ENCODE measurements at regions of chr1 and their contacts with region 1.

Region 1: GRCh38 chr1:110312188-110313121 is 26.7 kb upstream of the RBM15 start:
- DNase-seq: peak; percentile 81
- H3K4me3 ChIP-seq: no peak overlapping the region
- H3K27ac ChIP-seq: no peak overlapping the region
- H3K4me1 ChIP-seq: peaks cover 7% of the 10 kb centered on the region
- H3K27me3 ChIP-seq: no peaks in the 10 kb centered on the region
- CTCF ChIP-seq: peak; percentile 86

Region 2: GRCh38 chr1:109776911-109777310 is 535.5 kb before region 1 on chr1:
- intact Hi-C with region 1: no loop called
- DNase-seq: peak; percentile 86
- H3K4me3 ChIP-seq: no peak overlapping the region
- H3K27ac ChIP-seq: peak overlapping the region; percentile 4
- H3K4me1 ChIP-seq: no peaks in the 10 kb centered on the region
- H3K27me3 ChIP-seq: no peaks in the 10 kb centered on the region
- CTCF ChIP-seq: peak; percentile 96

Region 3: GRCh38 chr1:110209715-110210603 is 102.5 kb before region 1 on chr1 and contains the start of gene KCNC4:
- intact Hi-C with region 1: loop called (anchors 2 kb)
- DNase-seq: peak; percentile 90
- H3K4me3 ChIP-seq: peak within 1 kb of the TSS; percentile 80
- H3K27ac ChIP-seq: peak within 1 kb of the TSS; percentile 62
- H3K4me1 ChIP-seq: no peaks in the 10 kb centered on the region
- H3K27me3 ChIP-seq: no peaks in the 10 kb centered on the region
- CTCF ChIP-seq: no peak
- total RNA-seq, gene KCNC4: 6.7 to 8.4 TPM

Region 4: DNA sequence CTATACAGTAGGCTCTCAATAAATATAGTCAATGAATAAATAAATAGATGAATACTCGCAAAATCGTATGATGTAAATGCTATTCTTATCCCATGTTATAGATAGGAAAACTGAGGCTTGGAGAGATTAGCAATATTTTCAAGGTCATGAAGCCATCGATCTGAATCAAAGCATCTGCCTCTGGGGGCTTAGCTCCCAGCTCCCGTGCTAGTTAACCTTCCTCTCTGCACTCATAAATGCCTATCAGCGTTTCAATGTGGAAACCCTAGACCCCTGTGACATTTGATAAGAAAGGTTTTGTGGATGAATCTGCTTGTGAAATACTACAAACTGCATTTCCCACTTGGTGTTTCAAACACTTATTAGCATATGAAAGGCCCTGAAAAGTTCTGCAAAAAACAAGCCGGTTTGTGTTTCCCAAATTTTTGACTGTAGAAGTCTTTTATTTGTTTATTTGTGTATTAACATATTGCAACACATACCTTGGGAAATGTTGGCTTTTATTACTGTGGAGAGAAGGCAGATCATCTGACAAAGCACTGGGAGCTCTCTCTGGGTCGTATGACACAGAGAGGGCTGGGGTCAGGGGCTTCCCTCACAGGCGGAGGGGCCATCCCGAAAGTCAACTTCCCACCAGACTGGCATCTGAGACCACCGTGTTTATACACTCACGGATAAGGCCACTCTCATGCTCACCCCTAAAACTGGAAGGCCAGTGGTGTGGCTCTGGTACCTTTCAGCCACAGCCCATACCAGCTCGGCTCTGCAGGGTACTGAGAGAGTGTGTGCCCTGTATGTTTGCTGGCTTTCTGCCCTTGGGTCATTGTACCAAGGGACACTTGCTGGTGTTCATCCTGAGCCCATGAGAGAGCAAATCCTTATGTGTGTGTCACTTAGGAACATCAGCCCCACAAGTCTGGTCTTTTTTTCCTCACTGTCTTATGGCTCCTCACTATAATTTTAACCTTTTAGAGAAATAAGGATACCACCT is 137.5 kb after region 1 on chr1:
- intact Hi-C with region 1: loop called (anchors 5 kb)
- DNase-seq: no peak
- H3K4me3 ChIP-seq: no peak overlapping the region
- H3K27ac ChIP-seq: no peak overlapping the region
- H3K4me1 ChIP-seq: no peaks in the 10 kb centered on the region
- H3K27me3 ChIP-seq: no peaks in the 10 kb centered on the region
- CTCF ChIP-seq: no peak